OCI-LY7 (cell line): ENCODE measurements at regions of chr14 and their contacts with region 1.

Region 1: DNA sequence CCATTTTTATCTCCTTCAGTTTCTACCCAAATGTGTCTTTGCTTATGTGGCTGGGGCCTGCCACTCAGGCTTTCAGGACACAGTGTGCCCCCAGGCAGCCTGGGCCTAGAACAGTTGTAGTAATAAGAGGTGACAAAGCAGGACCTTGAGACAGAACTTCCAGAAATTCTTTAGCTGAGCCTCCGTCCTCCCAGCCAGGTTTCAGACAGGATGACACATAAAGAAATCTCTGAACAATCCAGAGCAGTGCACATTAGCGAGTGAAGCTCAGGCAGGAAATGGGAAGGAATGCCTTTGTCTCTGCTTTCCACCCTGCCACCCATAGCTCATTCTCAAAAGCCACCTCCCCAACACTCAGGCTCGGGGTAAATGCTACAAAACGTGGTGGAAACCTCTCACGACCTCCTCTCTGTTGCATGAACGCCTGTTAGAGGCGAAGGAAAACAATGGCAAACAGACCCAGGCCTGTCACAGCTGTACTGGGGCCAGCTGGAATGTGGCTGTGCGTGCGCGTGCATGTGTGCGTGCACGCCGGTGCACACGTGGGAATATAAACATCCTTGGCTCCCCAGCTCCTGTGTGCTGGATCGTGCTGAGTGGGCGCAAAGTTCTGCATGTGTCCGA is 286.7 kb downstream of the ZFP36L1 start:
- DNase-seq: peak; percentile 32
- H3K4me3 ChIP-seq: peak overlapping the region; percentile 17
- H3K27ac ChIP-seq: peak overlapping the region; percentile 86
- H3K4me1 ChIP-seq: peaks cover 55% of the 10 kb centered on the region
- CTCF ChIP-seq: no peak

Region 2: DNA sequence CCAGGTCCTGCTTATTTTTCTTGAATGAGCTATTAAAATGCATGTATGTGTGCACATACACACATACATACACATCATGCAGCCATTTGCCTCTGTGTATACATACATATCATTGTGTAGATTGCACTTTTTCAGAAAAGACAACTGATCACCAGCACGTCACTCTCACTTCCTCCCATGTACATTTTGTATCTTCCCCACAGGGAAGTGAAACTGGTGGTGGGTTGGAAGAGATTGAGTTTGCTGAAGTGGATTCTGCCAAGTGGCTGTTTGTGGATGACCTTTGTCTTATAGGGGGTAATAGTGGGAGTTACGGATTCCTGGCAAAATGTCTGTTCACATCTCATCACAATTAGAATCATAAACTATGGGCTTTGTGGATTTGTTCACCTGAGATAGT is 237.9 kb before region 1 on chr14:
- CTCF ChIA-PET with region 1: no interaction called
- POLR2A ChIA-PET with region 1: no interaction called
- intact Hi-C with region 1: loop called (anchors 5 kb)
- DNase-seq: peak; percentile 93
- H3K4me3 ChIP-seq: peak overlapping the region; percentile 42
- H3K27ac ChIP-seq: peak overlapping the region; percentile 93
- H3K4me1 ChIP-seq: peaks cover 91% of the 10 kb centered on the region
- CTCF ChIP-seq: no peak

Region 3: DNA sequence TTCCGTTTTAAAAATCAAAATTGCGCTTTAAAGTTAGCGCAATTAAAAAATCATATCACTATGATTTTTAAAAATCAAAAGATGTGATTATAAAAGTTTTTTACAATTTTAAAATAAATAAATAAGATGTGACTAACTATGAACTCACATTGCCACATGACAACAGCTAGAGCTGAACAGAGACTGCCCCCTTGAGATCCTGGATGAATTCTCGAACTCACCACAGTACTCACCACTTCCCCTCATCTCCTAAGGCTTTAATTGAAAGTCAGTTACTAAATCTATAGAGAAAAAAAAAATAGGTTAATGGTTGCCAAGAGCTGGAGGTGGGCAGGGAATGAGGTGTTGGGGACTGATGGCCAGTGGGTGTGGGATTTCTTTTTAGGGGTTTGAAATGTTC is 97.5 kb before region 1 on chr14:
- CTCF ChIA-PET with region 1: interaction called, 10 read pairs
- POLR2A ChIA-PET with region 1: interaction called, 4 read pairs
- intact Hi-C with region 1: no loop called
- DNase-seq: peak; percentile 53
- H3K4me3 ChIP-seq: no peak overlapping the region
- H3K27ac ChIP-seq: no peak overlapping the region
- H3K4me1 ChIP-seq: peaks cover 34% of the 10 kb centered on the region
- CTCF ChIP-seq: peak; percentile 76

Region 4: GRCh38 chr14:68520637-68521556 is 14.8 kb after region 1 on chr14:
- CTCF ChIA-PET with region 1: interaction called, 7 read pairs
- POLR2A ChIA-PET with region 1: interaction called, 55 read pairs
- intact Hi-C with region 1: no loop called
- DNase-seq: no peak
- H3K4me3 ChIP-seq: no peak overlapping the region
- H3K27ac ChIP-seq: no peak overlapping the region
- H3K4me1 ChIP-seq: peaks cover 16% of the 10 kb centered on the region
- CTCF ChIP-seq: no peak

Region 5: DNA sequence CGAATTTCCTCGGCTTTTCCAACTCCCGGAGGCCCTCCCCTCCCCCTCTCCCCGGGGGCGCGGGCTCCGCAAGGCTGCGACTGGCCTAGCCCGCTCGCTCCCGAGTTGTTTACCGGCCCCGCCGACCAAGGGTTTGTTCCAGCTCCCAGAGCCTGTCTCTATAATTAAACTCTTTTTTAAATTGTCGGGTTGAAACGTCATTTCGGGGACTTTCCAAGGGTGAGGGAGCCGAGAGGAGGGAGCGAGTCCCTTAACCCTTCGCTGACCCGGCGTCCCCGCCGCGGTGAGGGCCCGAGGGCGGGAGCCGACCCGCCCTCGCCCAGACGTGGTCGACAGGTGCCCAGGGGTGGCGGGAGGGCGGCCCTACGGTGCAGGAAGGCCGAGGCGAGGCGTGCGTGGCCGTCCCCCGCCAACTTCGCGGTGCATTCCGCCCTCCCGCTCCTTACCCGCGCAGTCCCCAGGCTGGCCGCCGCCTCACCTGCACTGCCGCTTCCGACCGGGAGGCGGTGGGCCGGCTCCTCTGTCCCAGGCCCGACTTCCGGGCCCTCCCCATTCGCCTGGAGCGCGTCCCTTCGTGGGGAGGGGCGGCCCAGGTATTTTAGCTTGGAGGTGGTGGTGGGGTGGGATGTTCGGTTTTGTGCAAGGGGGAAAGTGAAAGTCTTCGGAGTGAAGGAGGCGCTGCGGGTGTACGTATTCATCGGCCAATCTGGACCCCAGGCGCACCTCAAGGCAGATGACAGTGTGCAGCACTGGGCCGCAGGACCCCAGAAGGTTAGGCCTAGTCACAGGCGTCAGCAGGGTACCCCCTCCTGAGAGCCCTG is 289.7 kb after region 1 on chr14:
- CTCF ChIA-PET with region 1: no interaction called
- POLR2A ChIA-PET with region 1: interaction called, 9 read pairs
- intact Hi-C with region 1: loop called (anchors 5 kb)
- DNase-seq: peak; percentile 90
- H3K4me3 ChIP-seq: peak overlapping the region; percentile 87
- H3K27ac ChIP-seq: peak overlapping the region; percentile 92
- H3K4me1 ChIP-seq: peaks cover 39% of the 10 kb centered on the region
- CTCF ChIP-seq: peak; percentile 71